A549 (cell line): ENCODE measurements at regions of chr10 and their contacts with region 1.

Region 1: DNA sequence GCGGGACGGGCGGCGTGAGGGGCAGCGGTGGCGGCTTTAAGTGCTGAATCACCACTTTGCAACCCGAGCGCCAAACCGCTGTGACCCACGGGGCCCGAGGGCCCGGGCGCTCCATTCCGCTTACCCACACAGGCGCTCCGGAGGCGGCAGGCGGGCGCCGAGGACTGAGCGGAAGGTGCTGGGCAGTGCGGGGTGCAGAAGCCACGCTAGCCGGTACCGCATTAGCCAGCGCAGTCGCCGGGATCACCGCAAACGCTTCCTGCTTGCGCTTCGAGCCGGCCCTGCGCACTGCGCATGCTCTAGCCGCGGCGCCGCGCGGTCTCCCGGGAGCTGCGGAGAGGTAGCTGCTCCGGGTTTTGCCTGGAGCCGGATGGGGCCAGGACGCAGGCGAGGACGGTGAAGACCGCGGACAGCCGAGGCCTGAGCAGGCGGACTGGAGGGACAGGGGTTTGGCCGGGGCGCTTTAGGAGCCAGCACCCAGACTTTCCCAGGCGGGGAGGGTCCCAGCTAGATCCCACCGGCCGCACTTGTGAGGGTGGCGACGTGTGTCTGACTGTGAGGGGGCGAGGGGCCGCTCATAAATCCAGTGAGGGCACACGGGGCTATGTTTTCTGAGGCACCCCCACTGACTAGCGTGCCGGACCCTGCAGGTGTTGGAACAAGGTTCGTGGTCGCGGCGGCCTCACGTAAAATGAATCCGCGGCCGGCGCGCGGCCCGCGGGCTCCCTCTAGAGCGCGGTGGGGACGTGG is at the start of gene IDE:
- DNase-seq: peak; percentile 90 to 91
- ATAC-seq: peak; percentile 84 to 89
- H3K4me3 ChIP-seq: peak within 1 kb of the TSS; percentile 61
- H3K27ac ChIP-seq: peak within 1 kb of the TSS; percentile 93 to 94
- H3K4me1 ChIP-seq: peaks cover 30% of the 10 kb centered on the region
- CTCF ChIP-seq: peak; percentile 82
- EP300 ChIP-seq: no peak
- POLR2A ChIP-seq: peak; percentile 94
- RAD21 ChIP-seq: peak; percentile 77 to 90
- polyA plus RNA-seq, gene IDE: 60.9 and 61.1 TPM in 2 replicates

Region 2: DNA sequence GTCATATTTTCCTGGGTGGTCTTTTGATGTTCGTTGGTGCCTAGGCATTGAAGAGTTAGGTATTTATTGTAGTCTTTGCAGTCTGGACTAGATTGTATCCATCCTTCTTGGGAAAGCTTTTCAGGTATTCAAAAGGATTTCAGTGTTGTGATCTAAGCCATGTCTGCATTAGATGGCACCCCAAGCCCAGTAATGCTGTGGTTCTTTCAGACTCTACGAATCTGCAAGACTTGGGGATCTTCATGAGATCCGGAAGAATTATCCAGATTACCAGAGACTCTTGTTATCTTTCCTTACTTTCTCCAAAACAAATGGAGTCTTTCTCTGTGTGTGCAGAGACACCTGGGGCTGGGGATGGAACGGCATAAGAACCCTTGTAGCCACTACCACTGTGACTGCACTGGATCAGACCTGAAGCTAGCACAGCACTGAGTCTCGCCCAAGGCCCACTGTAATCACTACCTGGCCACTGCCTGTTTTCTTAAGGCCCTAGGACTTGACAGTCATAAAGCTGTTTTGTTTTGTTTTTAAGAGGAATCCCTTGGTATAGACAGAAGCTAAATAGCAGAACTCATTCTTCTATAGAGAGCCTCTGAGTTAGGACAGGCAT is 207.5 kb before region 1 on chr10:
- CTCF ChIA-PET with region 1: no interaction called
- POLR2A ChIA-PET with region 1: no interaction called
- DNase-seq: no peak
- ATAC-seq: peak; percentile 34 to 59; a peak in 4 of 6 replicates
- H3K4me3 ChIP-seq: no peak overlapping the region
- H3K27ac ChIP-seq: no peak overlapping the region
- H3K4me1 ChIP-seq: no peaks in the 10 kb centered on the region
- CTCF ChIP-seq: no peak
- EP300 ChIP-seq: no peak
- POLR2A ChIP-seq: no peak
- RAD21 ChIP-seq: 0 out of 5 replicates have a peak, but pooled peaks of 1 of the 2 experiments have one; percentile 13

Region 3: GRCh38 chr10:92517034-92517655 is 56.8 kb before region 1 on chr10:
- CTCF ChIA-PET with region 1: interaction called, 79 read pairs
- POLR2A ChIA-PET with region 1: interaction called, 11 read pairs
- DNase-seq: peak; percentile 49 to 78
- ATAC-seq: peak; percentile 90 to 99
- H3K4me3 ChIP-seq: no peak overlapping the region
- H3K27ac ChIP-seq: no peak overlapping the region
- H3K4me1 ChIP-seq: no peaks in the 10 kb centered on the region
- CTCF ChIP-seq: peak; percentile 89
- EP300 ChIP-seq: no peak
- POLR2A ChIP-seq: no peak
- RAD21 ChIP-seq: peak; percentile 61 to 68

Region 4: DNA sequence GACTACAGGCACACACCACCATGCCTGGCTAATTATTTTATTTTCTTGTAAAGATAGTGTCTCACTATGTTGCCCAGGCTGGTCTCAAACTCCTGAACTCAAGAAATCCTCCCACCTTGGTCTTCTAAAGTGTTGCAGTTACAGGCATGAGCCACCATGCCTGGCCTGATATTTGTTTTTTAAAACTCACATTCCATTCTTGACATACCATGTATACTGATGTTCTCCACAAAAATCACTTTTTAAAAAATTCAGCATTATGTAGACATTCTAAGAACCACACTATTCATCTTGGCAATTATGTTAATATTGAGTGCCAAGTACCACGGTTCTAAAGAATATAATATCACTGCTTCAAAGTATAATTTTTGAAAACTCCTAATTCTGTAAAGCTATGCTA is 43.6 kb before region 1 on chr10:
- CTCF ChIA-PET with region 1: interaction called, 45 read pairs
- POLR2A ChIA-PET with region 1: no interaction called
- DNase-seq: no peak
- ATAC-seq: no peak
- H3K4me3 ChIP-seq: no peak overlapping the region
- H3K27ac ChIP-seq: no peak overlapping the region
- H3K4me1 ChIP-seq: no peaks in the 10 kb centered on the region
- CTCF ChIP-seq: no peak
- EP300 ChIP-seq: no peak
- POLR2A ChIP-seq: no peak
- RAD21 ChIP-seq: no peak

Region 5: GRCh38 chr10:92538231-92538958 is 35.6 kb before region 1 on chr10:
- CTCF ChIA-PET with region 1: interaction called, 11 read pairs
- POLR2A ChIA-PET with region 1: no interaction called
- DNase-seq: no peak
- ATAC-seq: no peak
- H3K4me3 ChIP-seq: no peak overlapping the region
- H3K27ac ChIP-seq: no peak overlapping the region
- H3K4me1 ChIP-seq: no peaks in the 10 kb centered on the region
- CTCF ChIP-seq: no peak
- EP300 ChIP-seq: no peak
- POLR2A ChIP-seq: no peak
- RAD21 ChIP-seq: no peak

Region 6: DNA sequence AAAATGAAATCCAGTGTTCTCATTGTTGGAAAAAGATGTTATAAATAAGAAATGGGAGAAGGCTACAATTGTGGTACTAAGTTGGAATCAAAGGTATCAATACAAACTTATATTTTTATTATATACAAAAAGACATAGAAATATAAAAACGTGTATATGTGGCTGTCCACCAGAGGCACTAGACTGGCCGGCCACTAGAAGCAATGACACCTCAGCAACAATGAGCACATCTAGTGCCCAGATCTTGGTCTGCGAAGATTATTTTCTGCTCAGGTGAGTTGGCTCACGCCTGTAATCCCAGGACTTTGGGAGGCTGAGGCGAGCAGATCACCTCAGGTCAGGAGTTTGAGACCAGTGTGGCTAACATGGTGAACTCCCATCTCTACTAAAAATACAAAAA is 21.7 kb before region 1 on chr10:
- CTCF ChIA-PET with region 1: interaction called, 15 read pairs
- POLR2A ChIA-PET with region 1: no interaction called
- DNase-seq: peak in 1 of 2 experiments; percentile 21
- ATAC-seq: peak in 1 of 2 experiments; percentile 51; a peak in 1 of 6 replicates
- H3K4me3 ChIP-seq: no peak overlapping the region
- H3K27ac ChIP-seq: no peak overlapping the region
- H3K4me1 ChIP-seq: no peaks in the 10 kb centered on the region
- CTCF ChIP-seq: 0 out of 3 replicates have a peak, but pooled peaks have one; percentile 16
- EP300 ChIP-seq: no peak
- POLR2A ChIP-seq: no peak
- RAD21 ChIP-seq: no peak

Region 7: DNA sequence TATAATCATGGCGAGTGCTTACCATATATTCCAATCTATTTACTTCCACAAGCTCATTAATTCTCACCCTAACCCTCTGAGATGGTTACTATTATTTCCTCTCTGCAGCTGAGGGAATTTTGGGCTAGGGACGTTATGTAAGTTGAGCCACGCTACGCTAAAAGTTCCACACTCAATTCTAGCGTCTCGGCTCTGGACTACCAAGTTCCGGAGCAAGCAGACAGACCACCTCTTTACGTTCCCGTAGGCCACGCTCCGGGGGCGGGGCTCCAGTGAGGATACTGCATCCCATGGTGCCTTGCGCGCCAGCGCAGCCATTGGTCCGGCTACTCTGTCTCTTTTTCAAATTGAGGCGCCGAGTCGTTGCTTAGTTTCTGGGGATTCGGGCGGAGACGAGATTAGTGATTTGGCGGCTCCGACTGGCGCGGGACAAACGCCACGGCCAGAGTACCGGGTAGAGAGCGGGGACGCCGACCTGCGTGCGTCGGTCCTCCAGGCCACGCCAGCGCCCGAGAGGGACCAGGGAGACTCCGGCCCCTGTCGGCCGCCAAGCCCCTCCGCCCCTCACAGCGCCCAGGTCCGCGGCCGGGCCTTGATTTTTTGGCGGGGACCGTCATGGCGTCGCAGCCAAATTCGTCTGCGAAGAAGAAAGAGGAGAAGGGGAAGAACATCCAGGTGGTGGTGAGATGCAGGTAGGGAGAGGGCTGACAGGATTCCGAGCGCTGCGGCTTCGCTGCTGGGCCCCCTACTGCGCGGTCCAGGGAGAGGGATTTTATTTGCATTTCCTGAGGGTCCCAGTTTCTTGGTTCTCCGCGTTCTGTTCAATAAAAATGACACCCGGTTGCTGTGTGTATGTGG is 19.0 kb after region 1 on chr10 and contains the start of gene KIF11:
- CTCF ChIA-PET with region 1: interaction called, 19 read pairs
- POLR2A ChIA-PET with region 1: interaction called, 32 read pairs
- DNase-seq: peak; percentile 84 to 97
- ATAC-seq: peak; percentile 78 to 91
- H3K4me3 ChIP-seq: peak within 1 kb of the TSS; percentile 63
- H3K27ac ChIP-seq: peak within 1 kb of the TSS; percentile 95 to 96
- H3K4me1 ChIP-seq: peaks cover 22% of the 10 kb centered on the region
- CTCF ChIP-seq: no peak
- EP300 ChIP-seq: no peak
- POLR2A ChIP-seq: peak; percentile 83
- RAD21 ChIP-seq: no peak
- polyA plus RNA-seq, gene KIF11: 29.3 and 38.7 TPM in 2 replicates